ENCODE measurements at regions of chr11 and their contacts with region 1.

Region 1: DNA sequence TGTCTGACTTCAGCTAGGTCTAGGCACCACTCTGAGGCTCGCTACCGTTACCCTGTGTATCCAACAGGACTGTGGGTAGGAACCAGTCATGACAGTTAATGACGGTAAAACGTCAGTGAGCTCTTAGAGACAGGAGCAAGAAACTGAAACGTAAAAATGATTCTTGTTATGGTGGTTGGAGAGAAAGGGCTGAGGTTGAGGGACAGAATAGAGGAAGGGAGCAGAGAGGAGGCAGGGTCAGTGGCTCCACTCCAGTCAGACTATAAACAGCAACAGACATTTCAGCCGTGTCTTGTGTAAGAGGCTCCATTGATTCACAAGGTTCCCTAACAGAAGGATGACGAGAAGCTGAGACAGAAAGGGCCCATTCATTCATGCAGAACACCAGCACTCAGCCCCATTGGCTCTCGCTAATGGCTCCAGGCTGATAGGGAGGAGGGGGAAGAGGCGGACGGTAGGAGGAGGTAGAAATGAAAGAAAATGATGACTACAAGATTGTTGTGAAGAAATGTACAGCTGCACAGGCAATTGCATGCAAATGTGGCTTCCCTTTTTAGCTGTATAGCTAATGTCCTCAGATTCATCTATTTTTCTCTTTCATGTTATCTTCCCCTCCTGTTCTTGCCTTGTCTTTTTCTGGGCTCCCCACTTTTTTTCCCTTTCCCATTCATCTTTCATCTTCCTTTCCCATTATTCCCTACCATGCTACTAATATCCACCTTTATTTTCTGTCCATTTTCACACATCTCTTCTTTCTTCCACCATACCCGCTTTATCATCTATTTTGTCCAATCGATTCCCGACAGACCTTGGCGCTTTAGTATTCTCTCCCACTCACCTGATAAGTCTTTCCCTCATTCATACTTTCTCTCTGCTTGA is 34.3 kb downstream of the ETS1 start:
- DNase-seq: peak; percentile 47
- ATAC-seq: peak; percentile 78
- H3K4me3 Mint-ChIP-seq: peak overlapping the region; percentile 73
- H3K27ac Mint-ChIP-seq: peak overlapping the region; percentile 98
- H3K4me1 Mint-ChIP-seq: peaks cover 72% of the 10 kb centered on the region
- H3K27me3 Mint-ChIP-seq: no peaks in the 10 kb centered on the region
- CTCF ChIP-seq: no peak

Region 2: GRCh38 chr11:128472128-128473089 is 80.6 kb before region 1 on chr11:
- CTCF ChIA-PET with region 1: interaction called, 3 read pairs
- POLR2A ChIA-PET with region 1: interaction called, 36 read pairs
- intact Hi-C with region 1: loop called (anchors 1 kb)
- DNase-seq: no peak
- ATAC-seq: peak; percentile 26
- H3K4me3 Mint-ChIP-seq: peak overlapping the region; percentile 60
- H3K27ac Mint-ChIP-seq: peak overlapping the region; percentile 89
- H3K4me1 Mint-ChIP-seq: peaks cover 100% of the 10 kb centered on the region
- H3K27me3 Mint-ChIP-seq: no peaks in the 10 kb centered on the region
- CTCF ChIP-seq: no peak

Region 3: GRCh38 chr11:128535468-128536457 is 17.3 kb before region 1 on chr11:
- CTCF ChIA-PET with region 1: no interaction called
- POLR2A ChIA-PET with region 1: no interaction called
- intact Hi-C with region 1: loop called (anchors 2 kb)
- DNase-seq: no peak
- ATAC-seq: no peak
- H3K4me3 Mint-ChIP-seq: no peak overlapping the region
- H3K27ac Mint-ChIP-seq: no peak overlapping the region
- H3K4me1 Mint-ChIP-seq: no peaks in the 10 kb centered on the region
- H3K27me3 Mint-ChIP-seq: no peaks in the 10 kb centered on the region
- CTCF ChIP-seq: no peak

Region 4: GRCh38 chr11:128579798-128580504 is 26.9 kb after region 1 on chr11:
- CTCF ChIA-PET with region 1: no interaction called
- POLR2A ChIA-PET with region 1: interaction called, 12 read pairs
- intact Hi-C with region 1: loop called (anchors 1 kb)
- DNase-seq: no peak
- ATAC-seq: peak; percentile 79
- H3K4me3 Mint-ChIP-seq: no peak overlapping the region
- H3K27ac Mint-ChIP-seq: peak overlapping the region; percentile 13
- H3K4me1 Mint-ChIP-seq: peaks cover 42% of the 10 kb centered on the region
- H3K27me3 Mint-ChIP-seq: no peaks in the 10 kb centered on the region
- CTCF ChIP-seq: no peak

Region 5: GRCh38 chr11:128603752-128604414 is 50.9 kb after region 1 on chr11:
- CTCF ChIA-PET with region 1: interaction called, 11 read pairs
- POLR2A ChIA-PET with region 1: interaction called, 123 read pairs
- intact Hi-C with region 1: no loop called
- DNase-seq: no peak
- ATAC-seq: peak; percentile 63
- H3K4me3 Mint-ChIP-seq: no peak overlapping the region
- H3K27ac Mint-ChIP-seq: peak overlapping the region; percentile 78
- H3K4me1 Mint-ChIP-seq: peaks cover 70% of the 10 kb centered on the region
- H3K27me3 Mint-ChIP-seq: no peaks in the 10 kb centered on the region
- CTCF ChIP-seq: no peak

Region 6: GRCh38 chr11:128624269-128625175 is 71.5 kb after region 1 on chr11:
- CTCF ChIA-PET with region 1: interaction called, 62 read pairs
- POLR2A ChIA-PET with region 1: interaction called, 87 read pairs
- intact Hi-C with region 1: loop called (anchors 1 kb)
- DNase-seq: peak; percentile 64
- ATAC-seq: peak; percentile 82
- H3K4me3 Mint-ChIP-seq: peak overlapping the region; percentile 74
- H3K27ac Mint-ChIP-seq: peak overlapping the region; percentile 99
- H3K4me1 Mint-ChIP-seq: peaks cover 99% of the 10 kb centered on the region
- H3K27me3 Mint-ChIP-seq: no peaks in the 10 kb centered on the region
- CTCF ChIP-seq: no peak

Measured in activated B cell treated with CpG ODN at 0.5 μM for 24 hours (primary cell).